ENCODE measurements at regions of chr14 and their contacts with region 1.

Region 1: GRCh38 chr14:95098984-95099599 is 58.2 kb downstream of the DICER1 start:
- DNase-seq: peak; percentile 22
- ATAC-seq: peak; percentile 88
- H3K4me3 ChIP-seq: no peak overlapping the region
- H3K27ac ChIP-seq: no peak overlapping the region
- H3K4me1 ChIP-seq: no peaks in the 10 kb centered on the region
- H3K27me3 ChIP-seq: no peaks in the 10 kb centered on the region
- CTCF ChIP-seq: peak; percentile 78

Region 2: DNA sequence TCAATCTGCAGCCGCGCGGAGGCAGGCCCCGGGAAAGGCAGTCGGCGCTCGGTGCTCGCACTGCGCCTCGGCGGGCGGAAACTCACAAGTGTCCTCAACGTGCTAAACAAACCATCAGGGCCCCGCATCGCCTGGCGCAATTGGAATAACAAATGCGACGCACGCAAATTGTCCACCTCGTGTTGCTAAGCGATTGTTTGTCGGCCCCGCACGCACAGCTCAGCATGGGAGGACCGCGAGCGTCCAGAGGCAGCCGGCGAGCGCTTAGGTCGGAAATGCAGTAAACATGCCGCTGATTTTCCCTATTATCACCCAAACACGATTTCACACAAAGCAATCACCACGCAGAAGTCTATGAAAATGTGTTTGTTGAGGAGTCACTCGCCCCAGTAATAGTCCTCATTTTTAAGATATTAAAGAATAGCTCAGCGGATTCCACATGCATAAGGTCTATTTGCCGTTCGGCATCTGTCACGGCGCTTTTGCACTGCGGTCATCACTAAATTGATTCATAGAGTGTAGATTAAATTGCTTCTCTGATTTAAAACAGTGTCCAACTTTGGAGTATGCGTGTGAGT is 325.9 kb before region 1 on chr14:
- CTCF ChIA-PET with region 1: interaction called, 16 read pairs
- POLR2A ChIA-PET with region 1: no interaction called
- in situ Hi-C with region 1: no loop called
- intact Hi-C with region 1: no loop called
- DNase-seq: no peak
- ATAC-seq: no peak
- H3K4me3 ChIP-seq: no peak overlapping the region
- H3K27ac ChIP-seq: no peak overlapping the region
- H3K4me1 ChIP-seq: no peaks in the 10 kb centered on the region
- H3K27me3 ChIP-seq: peaks cover 6% of the 10 kb centered on the region; the same call in 1 of the 2 replicates
- CTCF ChIP-seq: no peak